ENCODE measurements at regions of chr19 and their contacts with region 1.

Region 1: DNA sequence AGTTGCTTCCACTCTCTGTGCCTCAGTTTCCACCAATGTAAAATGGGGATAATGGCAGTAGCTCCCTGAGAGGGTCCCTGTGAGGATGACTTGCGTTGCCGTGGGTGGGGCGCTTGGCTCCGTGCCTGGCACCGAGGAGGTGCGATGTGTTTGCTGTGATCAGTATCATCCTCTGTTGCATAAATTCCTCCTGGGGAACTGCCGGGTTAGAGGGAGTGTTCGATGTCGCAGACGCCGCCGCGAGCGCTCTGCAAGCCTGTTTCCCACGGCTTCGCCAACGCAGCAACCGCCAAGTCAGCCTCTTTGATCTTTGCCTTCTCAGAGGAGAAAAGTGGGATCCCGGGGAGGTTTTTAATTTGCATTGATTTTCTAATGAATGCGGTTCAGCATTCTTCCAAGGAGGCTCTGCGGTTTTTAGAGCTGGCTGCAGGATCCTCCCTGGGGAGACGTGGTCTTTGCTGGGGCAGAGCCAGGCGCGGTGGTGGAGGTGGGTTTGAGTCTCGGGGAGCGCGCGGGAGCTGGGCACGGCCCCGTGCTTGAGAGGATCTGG is 7.6 kb downstream of the GPR32 start:
- DNase-seq: no peak
- H3K4me3 ChIP-seq: no peak overlapping the region
- H3K27ac ChIP-seq: no peak overlapping the region
- H3K4me1 ChIP-seq: no peaks in the 10 kb centered on the region
- H3K27me3 ChIP-seq: no peaks in the 10 kb centered on the region
- CTCF ChIP-seq: no peak
- EP300 ChIP-seq: no peak
- POLR2A ChIP-seq: no peak

Region 2: DNA sequence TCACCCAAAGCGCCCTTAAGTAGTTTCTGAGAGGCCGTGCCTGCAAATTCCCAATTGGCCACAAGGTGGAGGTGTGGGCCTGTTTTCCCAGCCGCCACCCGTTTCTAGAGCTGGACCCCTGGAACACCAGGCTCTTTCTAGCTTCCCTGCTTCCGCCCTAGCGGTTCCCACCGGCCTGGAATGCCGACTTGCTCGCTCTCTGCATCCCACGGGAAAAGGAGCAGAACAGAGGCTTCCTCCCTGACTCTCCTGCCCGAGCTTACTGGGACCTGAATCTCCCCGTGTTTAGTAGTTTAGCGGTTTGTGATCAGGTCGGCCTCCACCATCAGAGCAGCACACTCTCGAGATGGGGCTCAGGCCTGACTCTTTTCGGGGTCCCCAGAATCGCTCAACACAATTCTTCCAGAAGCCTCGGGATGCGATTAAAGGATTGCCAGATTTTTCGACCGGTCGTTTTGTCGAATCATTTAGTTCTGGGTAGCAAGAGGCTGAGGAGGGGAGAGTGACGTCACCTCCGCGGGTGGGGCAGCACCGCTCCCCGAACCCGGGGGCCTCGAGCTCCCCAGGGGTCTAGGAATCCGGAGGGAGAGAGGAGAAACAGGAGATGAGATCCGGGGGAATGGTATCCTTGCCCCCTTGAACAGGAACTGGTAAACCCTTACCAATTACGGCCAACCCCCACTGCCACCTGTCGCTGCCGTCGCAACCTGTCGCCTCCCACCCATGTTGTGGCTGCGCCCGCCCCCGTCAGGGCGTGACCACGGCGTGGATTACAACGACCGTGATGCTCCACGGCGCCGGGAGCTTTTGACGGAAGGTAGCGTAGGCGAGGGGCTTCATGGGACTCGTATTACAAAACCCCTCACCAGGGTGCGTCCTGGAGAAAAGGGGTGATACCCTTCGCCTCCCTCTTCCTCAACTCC is 420.4 kb before region 1 on chr19:
- intact Hi-C with region 1: loop called in 2 of 4 experiments (anchors 5 kb)
- DNase-seq: peak; percentile 69 to 88 (median 85)
- H3K4me3 ChIP-seq: peak overlapping the region; percentile 46
- H3K27ac ChIP-seq: peak overlapping the region; percentile 63 to 74
- H3K4me1 ChIP-seq: peaks cover 2% of the 10 kb centered on the region
- H3K27me3 ChIP-seq: no peaks in the 10 kb centered on the region
- CTCF ChIP-seq: peak; percentile 83 to 90 (median 88)
- EP300 ChIP-seq: no peak
- POLR2A ChIP-seq: no peak

Region 3: DNA sequence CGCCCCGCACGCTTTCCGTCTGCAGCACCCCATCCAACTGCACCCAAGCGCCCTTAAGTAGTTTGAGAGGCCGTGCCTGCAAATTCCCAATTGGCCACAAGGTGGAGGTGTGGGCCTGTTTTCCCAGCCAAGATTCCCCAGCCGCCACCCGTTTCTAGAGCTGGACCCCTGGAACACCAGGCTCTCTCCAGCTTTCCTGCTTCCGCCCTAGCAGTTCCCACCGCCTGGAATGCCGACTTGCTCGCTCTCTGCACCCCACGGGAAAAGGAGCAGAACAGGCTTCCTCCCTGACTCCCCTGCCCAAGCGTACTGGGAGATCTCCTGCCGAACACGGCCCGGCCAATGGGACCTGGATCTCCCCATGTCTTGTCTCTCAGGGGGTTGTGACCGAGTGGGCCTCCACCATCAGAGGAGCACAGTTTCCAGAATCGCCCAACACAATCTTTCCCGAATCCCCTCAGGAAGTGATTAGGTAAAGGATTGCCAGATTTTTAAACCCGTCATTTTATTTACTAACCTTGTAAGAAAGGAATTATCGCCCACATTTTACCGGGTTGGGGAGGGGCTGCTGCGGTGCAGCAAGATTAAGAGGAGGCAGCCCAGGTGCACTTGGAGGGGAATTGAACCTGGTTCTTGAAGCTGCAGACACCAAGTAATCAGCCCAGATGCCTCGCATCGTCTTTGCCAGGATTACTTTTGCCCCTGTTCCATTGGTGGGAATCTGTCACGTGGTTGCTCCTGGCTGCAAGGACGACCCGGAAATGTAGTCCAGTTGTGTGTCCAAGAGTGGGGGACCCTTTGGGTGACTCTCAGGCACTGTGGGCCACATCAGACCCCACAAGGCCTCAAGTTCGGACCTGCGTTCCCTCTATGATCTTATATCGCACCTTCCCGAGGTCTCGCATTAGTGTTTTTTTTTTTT is 408.9 kb before region 1 on chr19:
- intact Hi-C with region 1: loop called in 2 of 4 experiments (anchors 5 kb)
- DNase-seq: peak; percentile 78 to 89 (median 87)
- H3K4me3 ChIP-seq: peak overlapping the region; percentile 46
- H3K27ac ChIP-seq: peak overlapping the region in 1 of 2 donors; percentile 44
- H3K4me1 ChIP-seq: no peaks in the 10 kb centered on the region
- H3K27me3 ChIP-seq: no peaks in the 10 kb centered on the region
- CTCF ChIP-seq: peak; percentile 72 to 87 (median 74)
- EP300 ChIP-seq: no peak
- POLR2A ChIP-seq: no peak

Region 4: DNA sequence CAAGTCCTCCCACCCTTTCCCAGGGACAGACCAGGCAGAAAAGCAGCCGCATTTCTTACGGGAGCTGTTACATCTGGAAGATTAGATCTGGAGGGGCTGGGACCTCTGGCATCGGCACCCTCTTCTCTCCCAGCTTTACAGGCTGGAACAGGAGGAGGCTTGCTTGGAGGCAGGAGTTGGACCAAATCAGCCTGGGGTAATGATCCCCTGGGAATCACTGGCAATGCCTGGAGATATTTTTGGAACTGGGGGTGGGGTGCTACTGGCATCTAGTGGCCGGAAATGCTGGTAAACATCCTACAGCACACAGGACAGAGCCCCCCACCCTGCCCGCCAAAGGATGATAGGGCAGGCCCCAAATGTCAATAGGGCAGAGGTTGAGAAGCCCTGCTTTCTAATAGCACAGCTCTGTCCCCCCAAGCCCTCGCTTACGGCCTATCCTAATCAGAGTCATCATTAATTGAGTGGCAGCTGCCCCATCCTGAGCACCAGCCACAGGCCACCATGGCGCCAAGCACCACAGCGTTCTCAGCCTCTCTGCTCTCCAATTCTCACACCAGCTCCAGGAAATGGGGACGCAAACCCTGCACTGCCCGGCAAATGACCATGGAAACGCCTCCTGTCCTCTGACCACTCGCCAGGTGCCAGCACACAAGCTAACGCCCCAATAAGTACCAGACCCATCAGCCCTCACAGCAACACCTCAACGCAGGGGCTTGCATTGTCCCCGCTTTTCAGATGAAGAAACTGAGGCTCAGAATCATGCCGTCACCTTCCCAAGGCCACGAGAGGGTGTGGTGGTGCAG is 230.2 kb before region 1 on chr19:
- intact Hi-C with region 1: loop called in 1 of 4 experiments (anchors 10 kb)
- DNase-seq: no peak
- H3K4me3 ChIP-seq: no peak overlapping the region
- H3K27ac ChIP-seq: no peak overlapping the region
- H3K4me1 ChIP-seq: no peaks in the 10 kb centered on the region
- H3K27me3 ChIP-seq: no peaks in the 10 kb centered on the region
- CTCF ChIP-seq: no peak
- EP300 ChIP-seq: no peak
- POLR2A ChIP-seq: no peak

Region 5: GRCh38 chr19:50724522-50725217 is 53.2 kb before region 1 on chr19:
- intact Hi-C with region 1: loop called in 1 of 4 experiments (anchors 5 kb)
- DNase-seq: peak; percentile 100
- H3K4me3 ChIP-seq: peak overlapping the region; percentile 91
- H3K27ac ChIP-seq: peak overlapping the region in 1 of 2 donors; percentile 68
- H3K4me1 ChIP-seq: peaks cover 24% of the 10 kb centered on the region
- H3K27me3 ChIP-seq: no peaks in the 10 kb centered on the region
- CTCF ChIP-seq: peak; percentile 91 to 94 (median 94)
- EP300 ChIP-seq: no peak
- POLR2A ChIP-seq: peak; percentile 74

Region 6: DNA sequence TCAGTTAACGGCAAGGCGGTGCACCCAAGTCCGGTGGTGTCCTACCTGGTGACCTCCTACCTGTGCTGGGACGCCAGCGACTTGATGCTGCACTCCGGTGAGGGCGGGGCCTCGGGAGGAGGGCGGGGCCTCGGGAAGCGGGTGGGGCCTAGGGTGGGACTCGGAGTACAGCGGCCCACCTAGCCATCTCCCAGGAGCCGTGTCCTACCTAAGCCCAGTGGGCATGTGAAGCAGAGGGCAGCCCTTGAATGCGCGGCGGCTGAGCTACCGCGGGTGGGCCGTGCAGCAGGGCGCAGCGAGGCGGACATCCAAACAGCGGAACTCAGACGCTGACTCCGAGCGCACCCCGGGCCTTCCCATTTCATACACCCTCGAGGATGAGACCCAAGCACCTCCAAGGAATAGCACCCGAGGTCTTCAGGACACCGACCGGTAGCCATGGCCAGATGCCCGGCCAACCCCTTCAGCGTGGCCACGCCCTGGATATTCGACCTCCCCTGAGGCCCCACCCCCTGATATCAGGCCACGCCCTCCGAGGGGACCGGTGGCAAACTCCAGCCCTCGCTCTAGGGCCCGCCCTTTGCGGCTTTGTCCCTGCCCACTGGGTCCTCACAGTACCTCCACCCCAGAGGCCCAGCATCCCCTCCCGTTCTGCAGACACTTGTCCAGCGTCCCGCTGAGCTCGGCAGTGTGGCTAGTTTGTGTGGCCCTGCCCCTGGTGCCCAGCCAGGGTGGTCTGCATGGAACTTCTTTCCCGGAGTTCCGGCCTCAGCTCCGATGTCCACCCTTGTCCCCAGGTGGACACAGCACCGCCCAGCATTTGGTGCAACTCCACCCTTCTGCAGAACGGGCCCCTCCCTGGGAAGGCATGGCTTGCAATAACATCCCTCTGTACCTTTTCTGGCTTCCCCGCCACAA is 40.4 kb after region 1 on chr19:
- intact Hi-C with region 1: no loop called
- DNase-seq: no peak
- H3K4me3 ChIP-seq: no peak overlapping the region
- H3K27ac ChIP-seq: no peak overlapping the region
- H3K4me1 ChIP-seq: no peaks in the 10 kb centered on the region
- H3K27me3 ChIP-seq: no peaks in the 10 kb centered on the region
- CTCF ChIP-seq: no peak
- EP300 ChIP-seq: no peak
- POLR2A ChIP-seq: no peak

Region 7: GRCh38 chr19:50893047-50893737 is 115.4 kb after region 1 on chr19:
- intact Hi-C with region 1: no loop called
- DNase-seq: no peak
- H3K4me3 ChIP-seq: no peak overlapping the region
- H3K27ac ChIP-seq: no peak overlapping the region
- H3K4me1 ChIP-seq: no peaks in the 10 kb centered on the region
- H3K27me3 ChIP-seq: no peaks in the 10 kb centered on the region
- CTCF ChIP-seq: no peak
- EP300 ChIP-seq: no peak
- POLR2A ChIP-seq: no peak

Region 8: GRCh38 chr19:52007806-52008557 is 1230.2 kb after region 1 on chr19 and contains the start of gene ZNF615:
- intact Hi-C with region 1: loop called in 1 of 4 experiments (anchors 5 kb)
- DNase-seq: peak; percentile 88 to 93 (median 90)
- H3K4me3 ChIP-seq: peak within 1 kb of the TSS; percentile 76
- H3K27ac ChIP-seq: peak within 1 kb of the TSS; percentile 63 to 71
- H3K4me1 ChIP-seq: peaks cover 3% of the 10 kb centered on the region
- H3K27me3 ChIP-seq: no peaks in the 10 kb centered on the region
- CTCF ChIP-seq: no peak
- EP300 ChIP-seq: no peak
- POLR2A ChIP-seq: peak; percentile 32
- total RNA-seq, gene ZNF615: 6.8 to 20.0 (median 15.3) TPM